A549 (cell line): ENCODE measurements at regions of chr18 and their contacts with region 1.

Region 1: DNA sequence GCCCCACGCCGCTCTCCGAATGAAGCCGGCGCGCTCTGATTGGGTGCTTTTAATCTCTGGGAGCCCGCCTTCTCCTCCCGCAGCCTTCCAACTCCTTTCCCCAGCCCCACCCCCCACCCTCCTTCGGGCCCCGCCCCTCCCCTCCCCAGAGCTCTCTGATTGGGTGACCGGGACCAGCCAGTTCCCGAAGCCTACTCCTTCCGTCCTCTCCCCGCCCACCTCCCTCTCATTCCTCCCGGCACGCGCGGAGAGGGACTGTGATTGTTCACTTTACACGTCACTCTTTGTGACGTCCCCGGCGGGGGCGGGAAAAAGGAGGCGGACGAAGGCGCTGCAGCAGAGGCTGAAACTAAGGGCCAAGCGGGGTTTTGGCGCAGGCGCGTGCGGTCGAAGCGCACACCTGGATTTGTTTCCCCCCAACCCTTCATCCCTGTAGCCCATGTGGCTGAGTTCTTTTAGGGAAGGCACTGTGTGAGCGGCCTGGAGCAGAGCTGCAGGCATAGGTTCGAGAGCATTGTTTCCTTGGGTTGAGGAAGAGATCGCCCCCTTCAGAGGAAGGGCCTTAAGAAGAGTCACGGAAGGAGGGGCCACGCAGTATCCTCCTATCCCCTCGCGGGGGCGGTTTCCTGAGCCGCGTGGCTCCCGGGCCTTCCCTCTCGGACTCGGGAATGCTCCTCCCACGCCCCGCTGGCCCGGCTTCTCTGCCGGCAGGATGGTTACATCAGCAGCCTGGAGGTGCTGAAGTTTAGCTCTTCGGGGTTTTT is at the start of gene MEX3C:
- DNase-seq: peak; percentile 76 to 98
- ATAC-seq: peak; percentile 83 to 91
- H3K4me3 ChIP-seq: peak within 1 kb of the TSS; percentile 99
- H3K27ac ChIP-seq: peak within 1 kb of the TSS; percentile 99 to 100
- H3K4me1 ChIP-seq: peaks cover 23% of the 10 kb centered on the region
- CTCF ChIP-seq: no peak
- EP300 ChIP-seq: no peak
- POLR2A ChIP-seq: peak; percentile 78
- RAD21 ChIP-seq: no peak; a peak in 2 of 5 replicates
- polyA plus RNA-seq, gene MEX3C: 48.5 and 61.9 TPM in 2 replicates

Region 2: DNA sequence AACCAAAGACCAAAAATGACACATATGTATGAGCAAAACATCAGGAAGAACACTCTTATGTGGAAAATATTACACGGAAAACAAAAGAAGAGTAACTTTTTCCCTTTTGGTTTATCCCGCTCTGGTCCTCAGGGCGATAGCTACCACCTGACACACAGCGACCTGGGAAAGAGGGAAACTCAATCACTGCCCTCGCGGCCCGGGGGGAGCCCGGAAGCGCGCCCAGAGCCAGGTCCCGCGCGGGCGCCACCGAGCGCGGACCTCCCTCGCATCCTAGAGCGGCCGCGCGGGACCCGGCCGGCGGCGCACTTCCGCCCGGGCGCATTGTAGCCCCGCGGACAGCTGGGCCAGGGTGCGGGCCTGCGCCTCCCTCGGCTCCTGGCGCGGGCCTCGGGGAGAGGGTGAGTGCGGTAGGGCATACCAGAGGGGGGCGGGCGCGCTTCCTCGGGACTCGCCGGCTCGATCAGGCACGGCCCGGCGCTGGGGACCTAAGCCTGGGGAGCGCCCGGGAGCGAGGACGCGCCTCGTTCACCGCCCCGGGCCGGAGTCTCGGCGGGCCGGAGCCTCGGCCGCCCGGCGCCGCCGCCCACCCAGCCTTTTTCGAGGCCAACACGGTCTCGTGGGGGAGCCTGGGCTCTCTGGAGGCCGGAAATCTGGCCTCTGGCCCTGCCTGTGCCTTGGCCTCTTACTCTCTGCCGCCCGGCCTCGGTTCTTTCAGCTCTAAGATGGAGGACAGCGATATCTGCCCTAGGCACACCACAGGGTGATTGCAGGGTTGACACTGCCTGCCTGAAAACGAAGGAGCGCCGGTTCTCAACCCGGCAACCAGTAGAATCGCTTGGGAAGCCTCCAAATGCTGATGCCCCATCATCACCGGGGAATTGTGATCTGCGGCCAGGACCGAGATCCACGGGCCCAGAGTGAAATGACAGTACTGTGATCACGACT is 229.9 kb before region 1 on chr18 and contains the start of gene ELAC1:
- CTCF ChIA-PET with region 1: no interaction called
- POLR2A ChIA-PET with region 1: interaction called, 10 read pairs
- DNase-seq: peak; percentile 50 to 82
- ATAC-seq: peak; percentile 98 to 99
- H3K4me3 ChIP-seq: peak within 1 kb of the TSS; percentile 64
- H3K27ac ChIP-seq: peak within 1 kb of the TSS; percentile 88 to 100
- H3K4me1 ChIP-seq: peaks cover 21% of the 10 kb centered on the region
- CTCF ChIP-seq: no peak
- EP300 ChIP-seq: no peak
- POLR2A ChIP-seq: peak; percentile 77
- RAD21 ChIP-seq: no peak
- polyA plus RNA-seq, gene ELAC1: 6.0 and 6.6 TPM in 2 replicates

Region 3: DNA sequence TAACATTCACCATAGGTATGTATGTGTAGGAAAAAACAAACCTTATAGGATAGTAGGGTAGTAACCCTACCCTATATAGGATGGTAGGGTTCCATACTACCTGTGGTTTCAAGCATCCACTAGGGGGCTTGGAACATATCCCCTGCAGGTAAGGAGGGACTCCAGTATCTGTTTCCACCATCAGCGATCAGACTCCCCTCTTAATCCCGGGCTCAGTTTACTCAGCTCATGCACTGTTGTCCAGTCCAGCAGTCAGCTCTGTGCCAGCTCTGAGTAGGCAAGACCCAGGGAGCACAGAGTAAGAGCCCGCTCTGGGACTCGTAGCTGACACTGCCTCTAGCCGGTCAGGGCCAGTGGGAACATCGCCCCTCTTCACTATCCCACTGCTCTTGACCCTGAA is 62.0 kb before region 1 on chr18:
- CTCF ChIA-PET with region 1: no interaction called
- POLR2A ChIA-PET with region 1: interaction called, 17 read pairs
- DNase-seq: peak in 1 of 2 experiments; percentile 15
- ATAC-seq: peak; percentile 68 to 84
- H3K4me3 ChIP-seq: no peak overlapping the region
- H3K27ac ChIP-seq: peak overlapping the region; percentile 69 to 81; a peak in 5 of 6 replicates
- H3K4me1 ChIP-seq: peaks cover 45% of the 10 kb centered on the region; the same call in 2 of the 3 replicates
- CTCF ChIP-seq: peak; percentile 28; the same call in 1 of the 3 replicates
- EP300 ChIP-seq: no peak
- POLR2A ChIP-seq: no peak
- RAD21 ChIP-seq: peak in 1 of 2 experiments; percentile 18; a peak in 1 of 5 replicates

Region 4: GRCh38 chr18:51235011-51235789 is 37.4 kb after region 1 on chr18:
- CTCF ChIA-PET with region 1: interaction called, 4 read pairs
- POLR2A ChIA-PET with region 1: interaction called, 24 read pairs
- DNase-seq: peak; percentile 48 to 55
- ATAC-seq: peak; percentile 89
- H3K4me3 ChIP-seq: no peak overlapping the region
- H3K27ac ChIP-seq: peak overlapping the region; percentile 54 to 76
- H3K4me1 ChIP-seq: peaks cover 31% of the 10 kb centered on the region
- CTCF ChIP-seq: no peak
- EP300 ChIP-seq: no peak
- POLR2A ChIP-seq: no peak
- RAD21 ChIP-seq: no peak

Region 5: DNA sequence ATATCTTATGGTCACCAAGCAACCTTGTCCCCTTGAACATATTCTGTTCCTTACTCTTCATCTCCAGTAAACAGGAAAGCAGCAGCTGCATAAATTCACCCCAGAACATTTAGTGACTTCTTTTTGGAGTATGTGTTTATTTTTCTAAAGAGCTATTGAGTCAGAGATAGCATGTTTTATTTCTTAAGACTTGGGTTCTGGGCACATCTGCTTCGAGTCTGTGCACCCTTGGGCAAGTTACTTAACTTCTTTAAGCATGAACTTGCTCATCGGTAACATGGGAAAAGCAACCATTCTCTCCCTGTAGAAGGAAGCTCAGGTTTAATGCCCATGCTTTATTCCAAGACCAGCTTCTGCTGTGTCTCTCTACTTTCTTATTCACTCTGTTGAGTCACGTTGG is 309.0 kb after region 1 on chr18:
- CTCF ChIA-PET with region 1: no interaction called
- POLR2A ChIA-PET with region 1: no interaction called
- DNase-seq: no peak
- ATAC-seq: no peak
- H3K4me3 ChIP-seq: no peak overlapping the region
- H3K27ac ChIP-seq: no peak overlapping the region
- H3K4me1 ChIP-seq: no peaks in the 10 kb centered on the region
- CTCF ChIP-seq: no peak
- EP300 ChIP-seq: no peak
- POLR2A ChIP-seq: no peak
- RAD21 ChIP-seq: no peak

Region 6: DNA sequence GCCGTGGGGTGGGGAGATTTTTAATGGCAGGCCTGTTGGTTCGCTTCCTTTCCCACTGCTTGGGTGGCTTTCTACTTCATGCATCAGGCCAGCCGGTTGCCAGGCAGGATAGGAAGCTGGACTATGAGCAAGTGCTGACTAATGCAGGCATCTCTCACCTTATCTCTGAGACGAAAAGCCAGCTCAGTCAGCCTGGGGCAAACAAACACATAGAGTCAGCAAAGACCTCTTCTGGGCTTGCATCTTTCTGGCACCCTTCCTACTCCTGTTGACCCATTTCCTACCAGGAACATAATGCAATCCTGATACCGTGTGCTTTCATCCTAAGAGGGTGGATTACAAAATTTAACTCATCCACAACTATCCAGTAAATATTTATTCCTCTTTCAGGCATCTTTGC is 416.2 kb after region 1 on chr18:
- CTCF ChIA-PET with region 1: interaction called, 3 read pairs
- POLR2A ChIA-PET with region 1: interaction called, 18 read pairs
- DNase-seq: peak; percentile 55 to 90
- ATAC-seq: peak; percentile 91
- H3K4me3 ChIP-seq: no peak overlapping the region
- H3K27ac ChIP-seq: peak overlapping the region; percentile 87 to 88
- H3K4me1 ChIP-seq: peaks cover 50% of the 10 kb centered on the region
- CTCF ChIP-seq: no peak
- EP300 ChIP-seq: peak; percentile 82 to 89; a peak in 3 of 5 replicates
- POLR2A ChIP-seq: no peak
- RAD21 ChIP-seq: peak in 1 of 2 experiments; percentile 9; a peak in 1 of 5 replicates